Activated CD4-positive, alpha-beta memory T cell treated with anti-CD3 and anti-CD28 coated beads, Interleukin-2, amount 10 ng/mL, durations not matched to agents 7 days and 5 days (primary cell): ENCODE measurements at regions of chr1 and their contacts with region 1.

Region 1: DNA sequence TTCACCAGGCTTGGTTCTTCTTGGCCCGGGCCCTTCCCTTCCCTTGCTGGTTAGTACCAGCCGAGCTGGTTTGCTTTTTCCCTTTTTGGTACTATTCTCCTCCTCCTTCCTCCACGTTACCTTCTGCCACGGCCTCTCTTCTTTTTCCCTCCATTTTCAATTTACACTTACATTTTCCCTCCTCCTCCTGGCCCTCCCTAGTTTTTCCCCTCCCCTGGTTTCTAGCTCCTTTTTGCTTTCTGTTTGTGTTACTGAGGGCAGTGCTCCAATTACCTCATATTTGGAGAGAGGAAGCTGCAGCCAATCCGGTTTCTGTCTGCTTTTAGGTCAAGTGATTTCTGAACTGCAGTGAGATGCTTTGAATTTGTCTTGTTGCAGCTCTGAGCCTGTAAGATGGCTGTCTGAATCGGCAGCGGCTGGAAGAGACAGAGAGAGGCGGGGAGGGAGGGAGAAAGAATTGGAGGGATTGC is 63.7 kb downstream of the MACF1 start:
- DNase-seq: peak; percentile 32
- H3K4me3 Mint-ChIP-seq: peak overlapping the region; percentile 55
- H3K27ac Mint-ChIP-seq: peak overlapping the region; percentile 61
- H3K4me1 Mint-ChIP-seq: peaks cover 75% of the 10 kb centered on the region
- H3K27me3 Mint-ChIP-seq: no peaks in the 10 kb centered on the region

Region 2: DNA sequence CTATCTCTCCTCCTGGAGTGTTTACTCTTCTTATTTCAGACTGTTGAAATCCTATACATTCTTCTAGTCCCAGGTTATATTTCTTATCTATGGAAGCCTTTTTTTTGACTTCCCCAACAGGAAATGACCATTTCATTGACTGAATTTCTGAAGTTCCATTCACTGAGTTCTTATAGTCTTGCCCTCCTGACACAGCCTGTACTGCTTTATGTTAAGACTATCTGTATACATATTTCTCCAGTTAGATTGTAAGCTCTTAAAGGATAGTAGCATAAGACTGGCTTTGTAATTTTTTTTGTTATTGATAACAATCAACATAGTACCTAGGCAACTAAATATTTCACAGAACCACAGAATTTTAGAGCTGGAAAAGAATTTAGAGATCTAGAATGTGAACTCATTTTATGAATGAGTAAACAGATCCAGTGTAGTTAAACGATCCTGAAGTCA is 78.5 kb before region 1 on chr1:
- CTCF ChIA-PET with region 1: interaction called, 184 read pairs
- POLR2A ChIA-PET with region 1: interaction called, 9 read pairs
- DNase-seq: no peak
- H3K4me3 Mint-ChIP-seq: no peak overlapping the region
- H3K27ac Mint-ChIP-seq: peak overlapping the region; percentile 37
- H3K4me1 Mint-ChIP-seq: peaks cover 86% of the 10 kb centered on the region
- H3K27me3 Mint-ChIP-seq: no peaks in the 10 kb centered on the region